Activated naive CD4-positive, alpha-beta T cell treated with anti-CD3 and anti-CD28 coated beads for 36 hours (primary cell): ENCODE measurements at regions of chr1 and their contacts with region 1.

Region 1: DNA sequence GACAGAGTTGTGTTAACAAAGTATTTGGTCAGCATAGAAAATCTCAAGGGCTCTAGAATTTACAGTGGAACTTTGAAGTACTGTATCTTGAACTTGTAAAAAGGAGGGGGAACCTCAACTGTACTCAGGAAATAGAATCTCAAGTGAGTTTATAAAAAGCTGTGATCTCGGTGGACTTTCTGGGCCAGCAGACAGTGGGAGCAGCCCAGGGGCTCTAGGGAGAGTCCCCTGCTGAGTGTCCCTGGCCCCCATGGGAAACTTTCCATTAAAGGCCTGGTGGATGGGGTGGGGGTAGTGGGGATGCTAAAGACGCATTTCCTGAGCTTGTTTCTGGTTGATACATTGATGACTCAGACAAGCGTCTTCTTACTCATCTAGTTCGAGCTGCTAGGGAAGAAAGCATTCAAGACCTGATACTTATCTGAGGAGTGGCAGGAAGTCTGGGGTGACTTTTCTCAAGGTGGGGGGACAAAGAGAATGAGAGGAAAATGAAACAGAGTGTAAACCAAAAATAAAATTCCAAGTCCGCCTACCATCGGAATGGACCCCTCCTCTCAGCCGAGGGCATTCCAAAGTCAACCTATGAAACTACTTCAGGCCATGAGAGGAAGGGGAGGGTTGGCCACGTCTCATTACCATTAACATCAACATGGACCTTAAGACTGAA is 65.5 kb downstream of the NID1 start:
- DNase-seq: peak; percentile 80
- H3K4me3 Mint-ChIP-seq: peak overlapping the region; percentile 11
- H3K27ac Mint-ChIP-seq: peak overlapping the region; percentile 88
- H3K4me1 Mint-ChIP-seq: peaks cover 47% of the 10 kb centered on the region
- H3K27me3 Mint-ChIP-seq: no peaks in the 10 kb centered on the region

Region 2: DNA sequence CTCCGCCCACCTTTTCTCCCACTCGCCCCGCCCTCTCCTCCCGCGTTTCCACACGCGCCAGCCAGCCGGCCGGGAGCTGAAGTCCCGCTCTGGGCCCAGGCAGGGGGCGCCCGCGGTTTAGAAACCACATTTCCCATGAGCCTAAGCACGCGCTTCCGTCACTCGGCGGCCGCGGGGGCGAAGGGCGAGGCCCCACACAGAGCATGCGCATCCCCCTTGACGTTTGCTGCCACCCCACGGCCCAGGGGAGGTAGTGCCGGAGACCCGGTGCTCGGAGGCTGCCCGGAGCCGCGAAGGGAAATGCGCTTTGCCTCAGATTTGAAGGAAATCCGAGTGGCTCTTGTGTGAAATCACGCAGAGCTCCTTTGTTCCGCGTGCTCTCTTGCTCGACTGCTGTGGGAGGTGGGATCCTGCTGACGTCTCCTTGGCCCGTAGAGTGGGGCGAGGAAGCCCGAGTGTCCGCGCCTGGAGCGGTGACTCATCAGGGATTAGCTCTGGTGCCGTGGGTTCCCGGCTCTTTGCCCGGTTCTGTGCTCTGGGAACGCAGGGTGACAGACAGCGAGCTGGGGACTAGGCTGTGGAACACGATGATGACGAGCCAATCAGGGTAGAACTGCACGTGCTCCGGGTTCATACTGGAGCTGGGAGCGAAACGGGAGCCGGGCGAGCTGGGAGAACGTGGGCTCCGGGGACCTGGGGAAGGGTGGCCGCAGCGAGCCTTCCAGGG is 494.7 kb before region 1 on chr1:
- CTCF ChIA-PET with region 1: no interaction called
- intact Hi-C with region 1: loop called (anchors 1 kb)
- DNase-seq: peak; percentile 99
- H3K4me3 Mint-ChIP-seq: peak overlapping the region; percentile 97
- H3K27ac Mint-ChIP-seq: peak overlapping the region; percentile 97
- H3K4me1 Mint-ChIP-seq: peaks cover 31% of the 10 kb centered on the region
- H3K27me3 Mint-ChIP-seq: no peaks in the 10 kb centered on the region

Region 3: DNA sequence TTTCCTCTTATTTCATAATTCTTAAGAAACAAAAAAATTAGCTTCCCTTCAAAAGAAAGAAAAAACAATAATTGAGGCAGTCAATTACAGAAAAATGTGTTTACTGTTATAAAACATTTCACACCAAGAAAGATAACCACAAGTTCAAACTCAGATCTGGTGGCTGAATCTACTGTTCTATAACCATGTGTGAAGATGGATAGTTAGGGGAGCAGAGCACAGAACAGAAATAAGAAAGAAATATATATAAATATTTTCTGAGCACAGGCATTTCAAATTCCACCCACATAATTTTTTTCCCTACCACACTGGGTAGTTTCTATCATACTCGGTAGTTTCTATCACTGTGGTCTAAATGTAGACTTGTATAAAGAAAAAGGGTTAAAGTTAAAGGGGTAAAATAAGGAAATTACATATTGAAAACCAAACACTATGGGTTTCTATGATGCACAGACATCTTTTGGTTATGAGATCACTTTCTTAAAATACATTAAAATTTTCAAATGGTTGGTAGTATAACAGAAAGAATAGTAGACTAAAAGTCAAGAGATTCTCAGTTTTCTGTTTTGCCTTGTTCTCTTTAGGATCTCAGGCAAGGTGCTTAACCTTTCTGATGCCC is 143.5 kb before region 1 on chr1:
- CTCF ChIA-PET with region 1: no interaction called
- intact Hi-C with region 1: loop called (anchors 1 kb)
- DNase-seq: no peak
- H3K4me3 Mint-ChIP-seq: no peak overlapping the region
- H3K27ac Mint-ChIP-seq: no peak overlapping the region
- H3K4me1 Mint-ChIP-seq: peaks cover 54% of the 10 kb centered on the region
- H3K27me3 Mint-ChIP-seq: no peaks in the 10 kb centered on the region

Region 4: DNA sequence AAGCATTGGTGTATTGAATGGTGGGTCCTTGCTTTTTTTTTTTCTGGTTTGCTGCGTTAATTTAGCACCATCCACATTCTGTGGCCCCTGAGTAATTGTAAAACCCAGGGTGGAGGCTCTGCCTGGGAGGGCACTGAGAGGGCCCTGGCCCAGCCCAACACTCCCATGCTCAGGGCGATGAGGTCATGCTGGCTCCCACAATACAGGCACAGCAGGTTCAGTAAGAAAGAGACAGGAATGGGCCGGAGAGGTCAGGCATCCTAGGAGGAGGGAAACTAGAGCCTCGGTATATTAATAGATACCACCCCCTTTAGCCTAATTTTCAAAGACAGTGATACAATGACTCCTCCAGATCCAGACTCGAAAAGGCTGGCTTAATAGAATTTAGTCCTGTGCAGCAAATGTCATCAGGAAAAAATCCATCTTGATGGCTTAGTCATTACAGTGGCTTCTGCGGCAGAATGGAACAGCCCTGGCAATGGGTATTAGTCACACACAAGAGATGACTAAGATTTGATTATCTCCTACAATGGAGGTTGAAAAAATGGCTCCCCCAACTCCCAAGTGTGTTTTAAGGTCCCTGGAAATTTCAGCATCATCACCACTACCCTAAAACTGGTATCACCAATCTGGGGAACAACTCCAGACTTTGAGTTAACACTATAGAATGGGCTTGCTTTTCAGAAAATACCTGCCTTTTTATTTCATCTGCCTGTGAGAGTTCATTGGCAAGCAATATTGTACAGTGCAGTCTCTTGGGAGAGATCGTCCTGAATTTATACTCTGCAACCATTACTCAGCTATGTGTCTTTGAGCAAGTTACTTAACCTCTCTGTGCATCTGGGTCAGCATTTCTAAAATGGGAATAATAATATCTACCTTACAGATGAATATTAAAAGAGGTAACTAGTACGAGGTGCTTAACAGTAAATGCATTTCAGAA is 88.8 kb before region 1 on chr1:
- CTCF ChIA-PET with region 1: no interaction called
- intact Hi-C with region 1: loop called (anchors 1 kb)
- DNase-seq: peak; percentile 73
- H3K4me3 Mint-ChIP-seq: no peak overlapping the region
- H3K27ac Mint-ChIP-seq: no peak overlapping the region
- H3K4me1 Mint-ChIP-seq: peaks cover 26% of the 10 kb centered on the region
- H3K27me3 Mint-ChIP-seq: no peaks in the 10 kb centered on the region

Region 5: GRCh38 chr1:235971571-235972310 is 27.7 kb before region 1 on chr1:
- CTCF ChIA-PET with region 1: interaction called, 12 read pairs
- intact Hi-C with region 1: no loop called
- DNase-seq: peak; percentile 94
- H3K4me3 Mint-ChIP-seq: peak overlapping the region; percentile 67
- H3K27ac Mint-ChIP-seq: peak overlapping the region; percentile 76
- H3K4me1 Mint-ChIP-seq: peaks cover 14% of the 10 kb centered on the region
- H3K27me3 Mint-ChIP-seq: no peaks in the 10 kb centered on the region

Region 6: GRCh38 chr1:236281654-236282424 is 282.4 kb after region 1 on chr1 and contains the start of gene ERO1B:
- CTCF ChIA-PET with region 1: interaction called, 4 read pairs
- intact Hi-C with region 1: loop called (anchors 2 kb)
- DNase-seq: peak; percentile 95
- H3K4me3 Mint-ChIP-seq: peak within 1 kb of the TSS; percentile 91
- H3K27ac Mint-ChIP-seq: peak within 1 kb of the TSS; percentile 66
- H3K4me1 Mint-ChIP-seq: peaks cover 41% of the 10 kb centered on the region
- H3K27me3 Mint-ChIP-seq: no peaks in the 10 kb centered on the region
- total RNA-seq, gene ERO1B: 1.6 to 2.5 TPM